ENCODE measurements at regions of chr2 and their contacts with region 1.

Region 1: DNA sequence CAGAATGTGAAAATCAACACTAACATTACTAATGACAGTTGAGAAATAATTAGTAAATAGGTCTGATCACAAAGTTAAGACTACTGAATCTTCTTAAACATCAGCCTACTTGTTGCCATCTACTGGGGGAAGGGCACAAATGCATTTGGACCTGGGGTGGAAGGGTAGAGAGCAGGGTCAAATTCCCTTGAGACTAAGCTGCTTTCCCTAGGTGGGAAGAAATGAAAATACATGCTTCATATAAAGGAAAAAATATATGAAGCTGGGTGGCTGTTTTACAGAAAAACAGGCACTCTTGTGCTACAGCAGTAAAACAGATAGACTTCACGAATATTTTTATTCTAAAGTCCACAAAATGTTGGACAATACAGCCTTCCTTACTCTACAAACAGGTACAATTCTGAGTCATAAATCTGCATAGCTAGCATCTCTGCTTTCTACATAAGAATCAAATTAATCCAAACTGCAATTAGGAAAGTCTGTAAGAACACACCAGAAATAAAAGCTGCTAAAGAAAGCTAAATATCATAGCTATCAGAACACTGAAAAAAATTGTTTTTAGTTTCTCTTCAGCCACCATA is 10.9 kb downstream of the TRIP12 start:
- DNase-seq: peak; percentile 31
- H3K4me3 Mint-ChIP-seq: no peak overlapping the region
- H3K27ac Mint-ChIP-seq: peak overlapping the region; percentile 52
- H3K4me1 Mint-ChIP-seq: peaks cover 55% of the 10 kb centered on the region
- H3K27me3 Mint-ChIP-seq: no peaks in the 10 kb centered on the region

Region 2: GRCh38 chr2:229780856-229781773 is 129.8 kb before region 1 on chr2:
- CTCF ChIA-PET with region 1: interaction called, 3 read pairs
- POLR2A ChIA-PET with region 1: no interaction called
- intact Hi-C with region 1: loop called (anchors 2 kb)
- DNase-seq: no peak
- H3K4me3 Mint-ChIP-seq: no peak overlapping the region
- H3K27ac Mint-ChIP-seq: peak overlapping the region; percentile 26
- H3K4me1 Mint-ChIP-seq: peaks cover 22% of the 10 kb centered on the region
- H3K27me3 Mint-ChIP-seq: no peaks in the 10 kb centered on the region

Region 3: GRCh38 chr2:229800997-229801754 is 109.7 kb before region 1 on chr2:
- CTCF ChIA-PET with region 1: interaction called, 15 read pairs
- POLR2A ChIA-PET with region 1: no interaction called
- intact Hi-C with region 1: loop called (anchors 1 kb)
- DNase-seq: peak; percentile 79
- H3K4me3 Mint-ChIP-seq: no peak overlapping the region
- H3K27ac Mint-ChIP-seq: no peak overlapping the region
- H3K4me1 Mint-ChIP-seq: no peaks in the 10 kb centered on the region
- H3K27me3 Mint-ChIP-seq: no peaks in the 10 kb centered on the region

Region 4: DNA sequence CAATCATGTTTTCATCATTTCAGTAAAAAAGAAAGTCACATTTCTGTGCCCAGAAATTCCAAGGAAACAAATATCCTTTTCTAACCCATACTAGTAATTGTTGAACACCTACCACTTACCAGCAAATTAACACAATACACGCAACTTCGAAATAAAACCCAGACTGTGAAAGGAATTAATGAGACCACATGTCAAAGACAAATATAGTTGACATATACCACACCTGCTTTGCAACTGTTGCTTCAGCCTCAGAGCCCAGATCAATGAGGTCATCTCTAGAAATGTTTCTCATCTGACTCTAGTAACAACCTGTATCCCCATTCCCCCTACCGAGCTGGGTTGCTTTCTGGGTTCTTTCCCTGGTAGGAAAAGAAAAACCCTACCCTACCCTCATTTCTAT is 41.7 kb before region 1 on chr2:
- CTCF ChIA-PET with region 1: no interaction called
- POLR2A ChIA-PET with region 1: no interaction called
- intact Hi-C with region 1: loop called (anchors 5 kb)
- DNase-seq: no peak
- H3K4me3 Mint-ChIP-seq: no peak overlapping the region
- H3K27ac Mint-ChIP-seq: no peak overlapping the region
- H3K4me1 Mint-ChIP-seq: peaks cover 54% of the 10 kb centered on the region
- H3K27me3 Mint-ChIP-seq: no peaks in the 10 kb centered on the region

Region 5: DNA sequence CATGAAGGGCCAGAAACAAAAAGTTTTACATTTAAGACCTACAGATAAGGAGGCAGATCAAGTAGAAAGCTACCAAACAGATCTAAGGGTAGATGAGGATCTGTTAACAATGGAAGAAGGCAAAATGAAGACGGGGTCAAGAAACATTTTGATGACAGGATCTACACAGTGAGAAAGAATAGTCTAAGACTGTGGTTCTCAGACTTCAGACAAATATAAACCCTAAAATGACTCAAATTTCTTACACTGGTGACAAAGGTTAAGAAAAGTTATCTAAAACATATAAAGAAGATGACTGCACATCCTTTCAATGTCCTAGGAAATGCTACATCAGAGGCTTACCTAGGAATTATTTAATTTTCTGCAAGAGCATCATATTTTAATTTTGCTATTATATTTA is 23.5 kb before region 1 on chr2:
- CTCF ChIA-PET with region 1: interaction called, 3 read pairs
- POLR2A ChIA-PET with region 1: no interaction called
- intact Hi-C with region 1: loop called (anchors 1 kb)
- DNase-seq: no peak
- H3K4me3 Mint-ChIP-seq: no peak overlapping the region
- H3K27ac Mint-ChIP-seq: no peak overlapping the region
- H3K4me1 Mint-ChIP-seq: peaks cover 55% of the 10 kb centered on the region
- H3K27me3 Mint-ChIP-seq: no peaks in the 10 kb centered on the region

Region 6: DNA sequence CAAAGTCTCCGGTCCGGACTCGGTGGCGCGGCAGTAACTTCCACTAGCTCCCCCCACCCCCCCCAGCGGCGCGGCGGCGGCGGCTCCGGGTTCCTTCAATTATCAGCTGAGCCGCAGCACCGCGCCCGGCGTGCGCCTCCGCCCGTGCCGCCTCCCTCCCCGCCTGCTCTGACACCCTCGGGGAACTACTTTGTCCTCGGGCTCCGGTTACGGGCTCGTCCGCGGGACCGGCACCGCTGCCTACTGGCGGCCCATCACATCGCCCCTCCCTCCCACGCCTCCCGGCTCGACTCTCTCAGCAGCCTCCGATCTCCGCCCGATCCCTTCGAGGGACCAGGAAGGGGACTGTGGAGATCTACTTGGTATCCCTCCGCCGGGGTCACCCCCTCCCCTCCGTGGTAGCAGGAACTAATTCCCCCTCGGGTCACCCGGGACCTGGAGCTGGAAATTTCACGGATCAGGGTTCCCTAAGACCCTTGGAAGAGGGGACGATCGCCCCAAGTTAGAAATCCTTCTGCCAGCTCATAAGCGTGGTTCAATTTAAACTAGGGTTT is 11.0 kb after region 1 on chr2 and contains the start of gene TRIP12:
- CTCF ChIA-PET with region 1: interaction called, 20 read pairs
- POLR2A ChIA-PET with region 1: interaction called, 7 read pairs
- intact Hi-C with region 1: loop called (anchors 1 kb)
- DNase-seq: peak; percentile 91
- H3K4me3 Mint-ChIP-seq: peak within 1 kb of the TSS; percentile 95
- H3K27ac Mint-ChIP-seq: peak within 1 kb of the TSS; percentile 99
- H3K4me1 Mint-ChIP-seq: peaks cover 29% of the 10 kb centered on the region
- H3K27me3 Mint-ChIP-seq: no peaks in the 10 kb centered on the region
- total RNA-seq, gene TRIP12: 226 to 253 TPM

Region 7: GRCh38 chr2:229955663-229956062 is 44.7 kb after region 1 on chr2:
- CTCF ChIA-PET with region 1: no interaction called
- POLR2A ChIA-PET with region 1: no interaction called
- intact Hi-C with region 1: no loop called
- DNase-seq: no peak
- H3K4me3 Mint-ChIP-seq: no peak overlapping the region
- H3K27ac Mint-ChIP-seq: no peak overlapping the region
- H3K4me1 Mint-ChIP-seq: no peaks in the 10 kb centered on the region
- H3K27me3 Mint-ChIP-seq: no peaks in the 10 kb centered on the region

Region 8: DNA sequence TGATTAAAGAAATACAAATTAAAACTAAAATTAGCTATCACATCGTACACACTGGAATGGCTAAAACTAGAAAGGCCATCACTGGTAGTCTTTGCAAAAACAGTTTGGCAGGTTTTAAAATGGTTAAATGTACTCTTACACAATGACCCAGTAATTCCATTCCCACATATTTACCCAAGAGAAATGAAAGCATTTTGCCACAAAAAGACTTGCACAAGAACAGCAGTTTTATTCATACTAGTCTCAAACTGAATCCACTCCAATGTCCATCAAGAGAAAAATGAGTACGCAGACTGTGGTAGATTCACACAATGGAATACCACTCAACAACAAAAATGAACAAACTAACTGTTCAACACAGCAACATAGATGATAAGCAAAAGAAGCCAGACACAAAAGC is 445.2 kb after region 1 on chr2:
- CTCF ChIA-PET with region 1: no interaction called
- POLR2A ChIA-PET with region 1: no interaction called
- intact Hi-C with region 1: no loop called
- DNase-seq: no peak
- H3K4me3 Mint-ChIP-seq: no peak overlapping the region
- H3K27ac Mint-ChIP-seq: no peak overlapping the region
- H3K4me1 Mint-ChIP-seq: peaks cover 27% of the 10 kb centered on the region
- H3K27me3 Mint-ChIP-seq: no peaks in the 10 kb centered on the region

Region 9: DNA sequence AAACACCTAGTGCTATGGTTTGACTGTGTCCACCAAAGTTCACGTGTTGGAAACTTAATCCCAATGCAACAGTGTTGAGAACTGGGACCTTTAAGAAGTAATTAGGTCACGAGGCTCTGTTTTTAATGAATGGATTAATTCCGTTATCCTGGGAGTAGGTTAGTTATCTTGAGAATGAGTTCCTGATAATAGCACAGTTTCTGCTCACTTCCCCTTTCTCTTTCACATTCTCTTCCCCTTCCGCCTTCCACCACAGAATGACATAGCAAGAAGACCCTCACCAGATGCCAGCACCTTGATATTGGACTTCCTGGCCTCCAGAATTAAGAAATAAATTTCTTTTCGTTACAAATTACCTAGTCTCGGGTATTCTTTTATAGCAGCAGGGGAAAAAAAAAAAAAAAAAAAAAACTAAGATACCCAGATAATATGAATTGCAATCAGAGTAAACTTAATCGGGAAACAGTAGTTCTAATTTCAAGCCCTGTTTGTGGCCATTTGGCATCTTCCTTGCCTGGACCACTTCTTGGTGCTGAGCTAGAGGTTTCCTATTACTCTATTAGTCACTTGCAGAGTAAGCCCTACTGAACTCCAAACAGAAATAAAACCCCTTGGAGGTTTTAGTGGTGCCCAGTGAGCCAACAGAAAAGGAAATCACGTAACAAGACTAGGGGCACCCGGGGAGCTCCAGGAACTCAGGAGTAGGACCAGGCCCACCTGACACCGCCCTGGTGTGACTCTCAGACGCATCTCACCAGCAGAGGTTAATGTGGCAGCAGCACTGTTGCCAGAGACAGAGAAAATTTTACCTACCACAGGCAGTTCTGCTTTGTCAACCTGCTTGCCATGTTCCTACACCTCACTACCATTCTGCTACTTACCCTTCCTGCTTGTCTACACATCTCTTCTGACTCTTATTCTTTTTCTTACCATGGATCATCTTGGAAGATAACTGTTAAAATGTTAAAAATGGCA is 654.2 kb after region 1 on chr2:
- CTCF ChIA-PET with region 1: no interaction called
- POLR2A ChIA-PET with region 1: no interaction called
- intact Hi-C with region 1: no loop called
- DNase-seq: no peak
- H3K4me3 Mint-ChIP-seq: no peak overlapping the region
- H3K27ac Mint-ChIP-seq: no peak overlapping the region
- H3K4me1 Mint-ChIP-seq: peaks cover 13% of the 10 kb centered on the region
- H3K27me3 Mint-ChIP-seq: no peaks in the 10 kb centered on the region

Measured in activated CD4-positive, alpha-beta memory T cell treated with anti-CD3 and anti-CD28 coated beads for 36 hours (primary cell).